Psoas muscle (tissue), 8 donors: ENCODE measurements at regions of chr2 and their contacts with region 1.

Region 1: GRCh38 chr2:19362755-19363473 is 4.5 kb upstream of the OSR1 start:
- DNase-seq: peak; percentile 80 to 86
- ATAC-seq: peak; percentile 52 to 75 (median 68)
- H3K4me3 ChIP-seq: peak overlapping the region; percentile 78
- H3K27ac ChIP-seq: no peak overlapping the region
- H3K4me1 ChIP-seq: no peaks in the 10 kb centered on the region
- H3K27me3 ChIP-seq: peaks cover 0 to 24% (median 0%) of the 10 kb centered on the region in 3 donors
- CTCF ChIP-seq: peak; percentile 79

Region 2: GRCh38 chr2:18387441-18388206 is 975.3 kb before region 1 on chr2:
- intact Hi-C with region 1: loop called in 1 of 2 experiments (anchors 2 kb)
- DNase-seq: peak; percentile 61 to 80
- ATAC-seq: peak; percentile 86 to 97 (median 90)
- H3K4me3 ChIP-seq: no peak overlapping the region
- H3K27ac ChIP-seq: no peak overlapping the region
- H3K4me1 ChIP-seq: peaks cover 3% of the 10 kb centered on the region
- H3K27me3 ChIP-seq: no peaks in the 10 kb centered on the region
- CTCF ChIP-seq: peak; percentile 97

Region 3: GRCh38 chr2:18520451-18521425 is 842.2 kb before region 1 on chr2:
- intact Hi-C with region 1: loop called (anchors 5 to 10 kb)
- DNase-seq: peak; percentile 89 to 93
- ATAC-seq: peak; percentile 90 to 98 (median 96)
- H3K4me3 ChIP-seq: no peak overlapping the region
- H3K27ac ChIP-seq: peak overlapping the region; percentile 42
- H3K4me1 ChIP-seq: peaks cover 23% of the 10 kb centered on the region
- H3K27me3 ChIP-seq: no peaks in the 10 kb centered on the region
- CTCF ChIP-seq: peak; percentile 93

Region 4: DNA sequence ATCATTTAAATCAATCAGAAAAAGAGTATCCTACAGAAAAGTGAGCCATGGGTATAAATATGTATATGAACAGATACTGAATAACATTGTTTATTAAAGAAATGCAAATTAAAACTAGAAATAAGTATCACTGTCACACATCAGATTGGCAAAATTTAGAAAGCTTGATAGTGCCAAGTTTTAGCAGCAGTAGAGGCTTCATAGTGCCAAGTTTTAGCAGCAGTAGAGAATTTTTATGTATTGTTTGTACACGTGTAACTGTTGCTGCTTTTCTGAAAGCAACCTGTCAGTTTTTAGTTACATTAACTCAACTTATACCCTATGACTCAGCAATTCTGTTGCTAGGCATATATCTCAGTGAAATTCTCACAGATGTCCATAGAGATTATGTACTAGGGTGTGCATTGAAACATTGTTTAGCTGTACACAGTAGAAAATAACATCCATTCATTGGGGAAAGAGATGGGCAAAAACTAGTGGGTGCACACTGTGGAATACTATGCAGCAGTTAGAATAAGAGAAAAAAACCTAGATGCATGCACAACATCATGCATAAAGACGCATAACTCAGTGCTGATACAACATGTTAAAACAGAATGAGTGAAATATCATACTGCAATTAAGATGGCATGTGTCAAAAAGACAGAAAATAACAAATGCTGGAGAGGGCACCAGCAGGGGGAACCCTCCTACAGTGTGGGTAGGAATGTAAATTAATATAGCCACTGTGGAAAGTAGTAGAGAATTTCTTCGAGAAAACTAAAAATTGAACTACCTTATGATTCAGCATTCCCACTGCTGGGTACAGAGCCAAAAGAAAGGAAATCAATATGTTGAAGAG is 479.1 kb before region 1 on chr2:
- intact Hi-C with region 1: loop called in 1 of 2 experiments (anchors 10 kb)
- DNase-seq: no peak
- ATAC-seq: no peak
- H3K4me3 ChIP-seq: no peak overlapping the region
- H3K27ac ChIP-seq: no peak overlapping the region
- H3K4me1 ChIP-seq: no peaks in the 10 kb centered on the region
- H3K27me3 ChIP-seq: no peaks in the 10 kb centered on the region
- CTCF ChIP-seq: no peak

Region 5: DNA sequence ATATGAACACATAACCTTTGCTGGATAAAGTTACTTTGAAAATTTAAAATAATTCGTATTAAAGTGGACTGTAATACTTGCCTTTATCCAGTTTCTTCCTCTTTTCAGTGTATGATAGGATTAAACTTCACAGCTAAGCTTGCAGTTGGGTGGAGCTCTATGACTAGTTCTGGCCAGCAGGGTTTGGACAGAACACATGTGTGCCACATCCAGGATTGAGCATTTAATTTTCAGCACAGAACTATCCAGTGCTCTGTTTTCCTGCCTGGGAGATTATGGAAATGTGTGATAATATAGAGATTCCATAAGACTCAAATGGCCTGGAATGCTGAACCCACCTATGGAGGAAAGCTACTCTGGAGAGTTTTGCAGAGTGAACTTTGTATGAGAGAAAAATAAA is 204.7 kb before region 1 on chr2:
- intact Hi-C with region 1: no loop called
- DNase-seq: no peak
- ATAC-seq: no peak
- H3K4me3 ChIP-seq: no peak overlapping the region
- H3K27ac ChIP-seq: no peak overlapping the region
- H3K4me1 ChIP-seq: no peaks in the 10 kb centered on the region
- H3K27me3 ChIP-seq: no peaks in the 10 kb centered on the region
- CTCF ChIP-seq: no peak

Region 6: DNA sequence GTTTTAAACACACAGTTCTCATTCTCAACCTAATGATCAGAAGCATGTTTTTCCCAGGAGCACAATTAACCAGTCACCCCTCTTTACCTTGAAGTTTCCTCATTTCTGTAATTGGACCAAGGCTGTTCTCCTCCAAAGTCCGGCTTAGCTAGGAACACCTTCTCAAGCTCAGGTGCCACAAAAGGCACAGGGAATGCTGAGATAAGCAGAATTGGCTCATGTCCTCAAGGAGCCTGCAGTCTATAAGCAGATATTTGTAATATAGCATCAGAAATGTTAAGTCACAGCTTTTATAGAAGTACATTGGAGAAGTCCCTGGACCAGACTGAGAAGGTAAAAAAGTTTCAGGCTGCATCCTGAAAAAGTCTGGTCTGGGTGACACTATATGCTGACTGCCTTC is 25.2 kb before region 1 on chr2:
- intact Hi-C with region 1: loop called in 1 of 2 experiments (anchors 1 kb)
- DNase-seq: no peak
- ATAC-seq: no peak
- H3K4me3 ChIP-seq: no peak overlapping the region
- H3K27ac ChIP-seq: no peak overlapping the region
- H3K4me1 ChIP-seq: no peaks in the 10 kb centered on the region
- H3K27me3 ChIP-seq: no peaks in the 10 kb centered on the region
- CTCF ChIP-seq: no peak